GM12878 (cell line): ENCODE measurements at regions of chr7 and their contacts with region 1.

Region 1: DNA sequence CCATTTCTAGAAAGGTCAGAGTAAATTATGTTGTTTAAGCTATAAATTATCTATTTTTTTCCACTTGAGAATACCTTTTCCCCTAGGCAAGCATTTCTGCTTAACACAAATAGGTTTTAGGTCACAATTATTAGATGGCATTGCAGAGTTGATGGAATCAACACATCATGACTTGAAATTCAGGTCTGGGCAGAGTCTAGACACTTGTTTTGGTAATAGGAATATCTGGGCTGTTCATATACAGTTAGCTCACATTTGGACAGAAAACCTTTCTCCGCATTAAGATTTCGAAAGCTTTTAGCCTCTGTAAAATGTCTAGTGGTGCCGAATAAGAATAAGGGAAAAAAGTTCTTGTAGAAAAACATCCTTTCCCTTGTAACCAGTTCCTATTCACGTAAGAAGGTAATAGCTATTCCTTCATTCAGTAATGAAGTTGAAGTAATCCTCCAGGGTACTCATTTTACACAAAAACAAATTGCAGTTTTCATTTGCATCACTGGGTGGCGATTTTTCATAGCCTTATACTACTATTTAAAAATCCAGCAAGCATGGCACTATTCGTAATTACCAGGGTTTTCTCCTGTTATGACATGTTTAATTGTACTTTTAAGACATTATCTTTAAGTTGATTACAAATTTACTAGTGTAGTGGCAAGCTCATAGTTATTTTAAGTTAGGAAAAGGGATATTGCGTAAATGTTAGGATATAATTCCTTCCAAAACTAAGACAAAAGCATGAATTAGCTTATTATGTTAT is 37.0 kb downstream of the RPA3 start:
- DNase-seq: peak; percentile 56
- ATAC-seq: peak; percentile 97
- H3K4me3 ChIP-seq: no peak overlapping the region
- H3K27ac ChIP-seq: no peak overlapping the region
- H3K4me1 ChIP-seq: peaks cover 3% of the 10 kb centered on the region; the same call in 1 of the 2 replicates
- H3K27me3 ChIP-seq: no peaks in the 10 kb centered on the region
- CTCF ChIP-seq: peak; percentile 44 to 67 (median 52); a peak in 5 of 6 replicates
- EP300 ChIP-seq: no peak
- POLR2A ChIP-seq: no peak
- RAD21 ChIP-seq: peak; percentile 86

Region 2: GRCh38 chr7:7077945-7078344 is 603.4 kb before region 1 on chr7:
- CTCF ChIA-PET with region 1: no interaction called
- POLR2A ChIA-PET with region 1: no interaction called
- RAD21 ChIA-PET with region 1: no interaction called
- SMC1A ChIA-PET with region 1: no interaction called
- in situ Hi-C with region 1: no loop called
- intact Hi-C with region 1: no loop called
- DNase-seq: no peak
- ATAC-seq: no peak
- H3K4me3 ChIP-seq: no peak overlapping the region
- H3K27ac ChIP-seq: no peak overlapping the region
- H3K4me1 ChIP-seq: no peaks in the 10 kb centered on the region
- H3K27me3 ChIP-seq: no peaks in the 10 kb centered on the region
- CTCF ChIP-seq: no peak
- EP300 ChIP-seq: no peak
- POLR2A ChIP-seq: no peak
- RAD21 ChIP-seq: no peak

Region 3: DNA sequence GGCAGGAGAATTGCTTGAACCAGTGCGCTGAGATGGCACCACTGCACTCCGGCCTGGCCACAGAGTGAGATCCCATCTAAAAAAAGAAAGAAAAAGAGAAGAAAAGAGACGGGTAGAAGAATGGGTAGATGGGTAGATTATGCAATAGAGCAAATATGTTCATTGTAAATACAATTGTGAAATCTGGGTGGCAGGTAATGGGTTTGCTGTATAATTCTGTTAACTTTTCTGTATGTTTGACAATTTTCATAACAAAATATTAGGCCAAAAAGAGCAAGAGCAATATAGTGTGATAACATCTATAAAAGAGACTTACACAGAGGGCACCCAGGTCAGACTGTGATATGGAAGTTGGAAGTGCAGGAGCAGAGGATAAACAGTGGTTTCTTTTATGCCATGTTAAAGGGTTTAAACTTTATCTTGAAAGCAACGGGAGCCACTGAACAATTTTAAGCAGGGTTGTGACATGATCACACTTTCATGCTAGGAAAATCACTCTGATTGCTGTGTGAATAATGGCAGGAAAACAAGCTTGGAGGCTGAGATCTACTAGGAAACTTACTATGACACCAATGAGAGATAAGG is 139.0 kb before region 1 on chr7:
- CTCF ChIA-PET with region 1: no interaction called
- POLR2A ChIA-PET with region 1: no interaction called
- RAD21 ChIA-PET with region 1: no interaction called
- SMC1A ChIA-PET with region 1: no interaction called
- in situ Hi-C with region 1: no loop called
- intact Hi-C with region 1: no loop called
- DNase-seq: no peak
- ATAC-seq: no peak
- H3K4me3 ChIP-seq: no peak overlapping the region
- H3K27ac ChIP-seq: no peak overlapping the region
- H3K4me1 ChIP-seq: no peaks in the 10 kb centered on the region
- H3K27me3 ChIP-seq: no peaks in the 10 kb centered on the region
- CTCF ChIP-seq: no peak
- EP300 ChIP-seq: no peak
- POLR2A ChIP-seq: no peak
- RAD21 ChIP-seq: no peak

Region 4: GRCh38 chr7:7595451-7595850 is 85.9 kb before region 1 on chr7:
- CTCF ChIA-PET with region 1: interaction called, 4 read pairs
- POLR2A ChIA-PET with region 1: no interaction called
- RAD21 ChIA-PET with region 1: interaction called, 12 read pairs
- SMC1A ChIA-PET with region 1: interaction called, 8 read pairs
- in situ Hi-C with region 1: no loop called
- intact Hi-C with region 1: no loop called
- DNase-seq: no peak
- ATAC-seq: peak; percentile 60
- H3K4me3 ChIP-seq: no peak overlapping the region
- H3K27ac ChIP-seq: no peak overlapping the region
- H3K4me1 ChIP-seq: no peaks in the 10 kb centered on the region
- H3K27me3 ChIP-seq: no peaks in the 10 kb centered on the region
- CTCF ChIP-seq: peak in 1 of 3 experiments; percentile 13; a peak in 1 of 6 replicates
- EP300 ChIP-seq: no peak
- POLR2A ChIP-seq: no peak
- RAD21 ChIP-seq: peak; percentile 29; the same call in 1 of the 2 replicates

Region 5: GRCh38 chr7:7713730-7714129 is 32.4 kb after region 1 on chr7:
- CTCF ChIA-PET with region 1: interaction called, 23 read pairs
- POLR2A ChIA-PET with region 1: no interaction called
- RAD21 ChIA-PET with region 1: interaction called, 49 read pairs
- SMC1A ChIA-PET with region 1: interaction called, 58 read pairs
- in situ Hi-C with region 1: no loop called
- intact Hi-C with region 1: no loop called
- DNase-seq: no peak
- ATAC-seq: peak; percentile 52
- H3K4me3 ChIP-seq: no peak overlapping the region
- H3K27ac ChIP-seq: no peak overlapping the region
- H3K4me1 ChIP-seq: peaks cover 1% of the 10 kb centered on the region; the same call in 1 of the 2 replicates
- H3K27me3 ChIP-seq: no peaks in the 10 kb centered on the region
- CTCF ChIP-seq: no peak
- EP300 ChIP-seq: no peak
- POLR2A ChIP-seq: no peak
- RAD21 ChIP-seq: no peak

Region 6: GRCh38 chr7:7751243-7752092 is 70.1 kb after region 1 on chr7:
- CTCF ChIA-PET with region 1: interaction called, 179 read pairs
- POLR2A ChIA-PET with region 1: no interaction called
- RAD21 ChIA-PET with region 1: interaction called, 148 read pairs
- SMC1A ChIA-PET with region 1: interaction called, 218 read pairs
- in situ Hi-C with region 1: no loop called
- intact Hi-C with region 1: no loop called
- DNase-seq: no peak
- ATAC-seq: peak; percentile 34; the same call in 1 of the 3 replicates
- H3K4me3 ChIP-seq: no peak overlapping the region
- H3K27ac ChIP-seq: no peak overlapping the region
- H3K4me1 ChIP-seq: no peaks in the 10 kb centered on the region
- H3K27me3 ChIP-seq: no peaks in the 10 kb centered on the region
- CTCF ChIP-seq: no peak
- EP300 ChIP-seq: no peak
- POLR2A ChIP-seq: no peak
- RAD21 ChIP-seq: no peak

Region 7: DNA sequence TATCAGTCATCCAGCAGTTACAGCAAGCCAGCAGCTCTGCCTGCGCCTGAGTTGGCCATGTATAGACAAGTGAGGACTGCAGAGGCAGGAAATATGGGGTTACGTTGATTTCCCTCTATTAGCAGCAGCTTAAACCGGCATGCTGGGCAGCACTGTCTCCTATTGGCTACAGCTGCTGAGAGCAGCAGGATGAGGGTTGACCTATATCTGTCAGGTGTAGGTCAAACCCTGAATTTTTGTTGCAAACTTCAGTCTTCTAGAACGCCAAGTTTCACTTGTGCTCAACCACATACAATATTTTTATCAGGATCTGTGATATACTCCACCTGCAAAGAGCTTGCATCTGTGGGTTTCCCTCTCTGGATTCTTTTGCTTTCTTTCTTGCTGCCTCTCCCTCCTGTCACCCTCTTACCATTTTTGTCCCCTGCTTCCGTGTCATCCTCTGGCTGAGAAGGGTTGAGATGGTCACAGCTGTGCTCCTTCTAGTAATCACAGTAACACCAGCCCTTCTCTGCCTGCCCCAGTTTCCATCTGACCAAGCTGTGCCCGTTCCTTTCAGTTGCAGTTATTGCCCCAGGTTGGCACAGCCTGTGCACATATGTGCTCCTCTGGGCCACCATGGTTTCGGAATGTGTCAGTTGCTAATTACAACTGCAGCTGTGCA is 263.4 kb after region 1 on chr7:
- CTCF ChIA-PET with region 1: interaction called, 24 read pairs
- POLR2A ChIA-PET with region 1: interaction called, 4 read pairs
- RAD21 ChIA-PET with region 1: interaction called, 29 read pairs
- SMC1A ChIA-PET with region 1: interaction called, 15 read pairs
- in situ Hi-C with region 1: no loop called
- intact Hi-C with region 1: no loop called
- DNase-seq: peak; percentile 99
- ATAC-seq: peak; percentile 95
- H3K4me3 ChIP-seq: peak overlapping the region; percentile 52
- H3K27ac ChIP-seq: peak overlapping the region; percentile 78
- H3K4me1 ChIP-seq: peaks cover 15% of the 10 kb centered on the region
- H3K27me3 ChIP-seq: no peaks in the 10 kb centered on the region
- CTCF ChIP-seq: 0 out of 6 replicates have a peak, but pooled peaks of 1 of the 3 experiments have one; percentile 7
- EP300 ChIP-seq: peak; percentile 78 to 85
- POLR2A ChIP-seq: peak; percentile 54
- RAD21 ChIP-seq: peak; percentile 46

Region 8: DNA sequence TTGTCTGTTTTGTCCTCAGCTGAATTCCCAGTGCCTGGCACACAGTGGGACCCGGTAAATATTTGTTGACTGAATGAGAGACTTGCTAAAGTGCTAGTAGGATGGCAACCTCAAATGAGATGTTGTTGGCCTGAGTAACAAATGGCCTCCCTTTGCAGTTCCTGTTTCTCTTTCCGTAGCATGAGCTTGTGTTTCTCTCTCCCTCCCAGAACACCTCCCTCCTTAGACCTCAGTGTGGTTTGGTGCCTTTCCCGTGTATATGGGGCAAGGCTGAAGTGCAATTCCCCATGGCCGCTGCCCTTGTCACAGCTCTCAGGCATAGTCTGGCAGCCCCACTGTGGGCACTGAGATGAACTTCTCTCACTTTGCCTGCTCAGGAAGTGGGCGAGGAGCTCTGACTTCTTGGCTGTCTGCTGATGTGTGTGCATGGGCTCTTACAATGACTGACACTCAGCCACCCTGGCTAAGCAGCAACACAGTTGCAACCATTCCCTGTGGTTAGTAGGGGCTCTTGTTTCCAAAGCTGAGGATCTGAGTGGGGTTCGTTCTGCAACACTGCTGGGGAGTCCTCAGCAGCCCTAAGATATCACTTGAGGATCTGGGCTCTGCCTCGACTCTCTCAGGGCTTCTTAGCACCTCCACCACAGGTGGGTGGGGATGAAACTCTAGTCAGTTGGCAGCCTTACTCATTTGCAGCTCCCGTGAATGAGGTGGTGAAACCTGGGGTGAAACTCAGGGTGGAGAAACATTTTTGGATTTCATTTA is 444.5 kb after region 1 on chr7:
- CTCF ChIA-PET with region 1: interaction called, 3 read pairs
- POLR2A ChIA-PET with region 1: no interaction called
- RAD21 ChIA-PET with region 1: interaction called, 14 read pairs
- SMC1A ChIA-PET with region 1: interaction called, 6 read pairs
- in situ Hi-C with region 1: no loop called
- intact Hi-C with region 1: no loop called
- DNase-seq: peak; percentile 95
- ATAC-seq: peak; percentile 80
- H3K4me3 ChIP-seq: no peak overlapping the region; the same call in 1 of the 2 replicates
- H3K27ac ChIP-seq: peak overlapping the region; percentile 90
- H3K4me1 ChIP-seq: peaks cover 68% of the 10 kb centered on the region
- H3K27me3 ChIP-seq: no peaks in the 10 kb centered on the region
- CTCF ChIP-seq: no peak
- EP300 ChIP-seq: peak; percentile 66 to 81
- POLR2A ChIP-seq: peak; percentile 74
- RAD21 ChIP-seq: peak; percentile 25